Heart left ventricle (tissue), 16 donors: ENCODE measurements at regions of chr1 and their contacts with region 1.

Region 1: DNA sequence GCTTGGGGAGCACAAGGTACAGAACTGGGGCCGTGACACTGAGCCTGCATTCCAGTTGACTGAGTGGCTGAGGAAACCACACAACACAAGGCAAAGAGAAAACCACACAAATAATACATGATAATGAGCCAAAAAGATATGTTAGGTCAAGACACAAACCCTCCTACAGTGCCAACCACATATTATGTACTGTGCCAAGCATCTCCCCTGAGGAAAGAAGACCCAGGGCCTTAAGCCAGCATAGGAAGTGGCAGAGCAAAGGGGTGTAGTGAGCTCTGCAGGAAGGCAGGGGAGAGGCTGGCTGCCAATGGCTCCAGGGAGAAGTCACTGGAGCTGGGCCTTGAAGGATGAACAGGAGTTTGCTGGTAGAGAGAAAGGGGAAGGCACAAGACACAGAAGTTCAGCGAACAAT is 28.2 kb downstream of the CTNNBIP1 start:
- DNase-seq: no peak
- ATAC-seq: no peak
- H3K4me3 ChIP-seq: no peak overlapping the region
- H3K27ac ChIP-seq: peak overlapping the region in 2 of 12 donors; percentile 23 to 48
- H3K4me1 ChIP-seq: peaks cover 0 to 60% (median 31%) of the 10 kb centered on the region in 12 donors
- H3K27me3 ChIP-seq: no peaks in the 10 kb centered on the region
- CTCF ChIP-seq: no peak
- POLR2A ChIP-seq: no peak

Region 2: GRCh38 chr1:9700340-9700739 is 181.5 kb before region 1 on chr1:
- intact Hi-C with region 1: no loop called
- DNase-seq: no peak
- ATAC-seq: no peak
- H3K4me3 ChIP-seq: no peak overlapping the region
- H3K27ac ChIP-seq: no peak overlapping the region
- H3K4me1 ChIP-seq: peaks cover 0 to 34% (median 0%) of the 10 kb centered on the region in 12 donors
- H3K27me3 ChIP-seq: no peaks in the 10 kb centered on the region
- CTCF ChIP-seq: no peak
- POLR2A ChIP-seq: no peak

Region 3: DNA sequence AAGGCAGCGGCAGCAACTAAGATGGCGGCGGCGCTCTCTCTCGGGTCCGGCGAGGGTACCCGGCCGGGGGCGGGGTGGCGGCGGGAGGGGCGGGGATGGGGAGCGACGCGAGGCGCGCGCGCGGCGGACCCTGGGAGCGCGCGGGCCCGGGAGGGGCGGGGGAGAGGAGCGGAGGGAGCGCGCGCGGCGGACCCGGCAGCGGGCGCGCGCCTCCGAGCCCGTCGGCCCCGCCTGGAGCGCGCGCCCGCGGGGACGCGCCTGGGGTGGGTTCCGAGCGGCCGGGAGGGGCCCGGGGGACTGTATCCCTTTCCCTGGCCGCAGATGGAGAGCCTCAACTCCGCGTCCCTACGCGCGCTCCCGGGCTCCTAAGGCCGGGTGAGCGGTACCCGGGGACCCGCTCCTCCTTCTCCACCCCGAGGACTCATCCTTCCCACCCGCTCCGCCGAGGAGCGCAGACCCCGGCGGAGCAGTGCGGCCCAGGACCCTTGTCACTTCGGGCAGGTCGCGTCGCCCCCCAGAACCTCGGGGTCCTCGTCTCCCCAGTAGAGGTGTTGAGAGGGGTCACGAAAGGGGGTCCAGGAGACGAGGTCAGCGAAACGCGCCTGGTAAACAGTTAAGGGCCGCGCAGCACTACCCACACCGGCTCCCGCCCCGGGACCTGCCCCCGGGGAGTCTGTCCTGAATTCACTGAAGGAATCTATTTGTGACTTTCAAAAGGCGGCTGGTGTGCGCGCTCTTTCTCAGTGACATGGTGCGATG is 57.7 kb before region 1 on chr1 and contains the start of gene CLSTN1:
- intact Hi-C with region 1: no loop called
- DNase-seq: peak; percentile 91 to 96 (median 92)
- ATAC-seq: peak; percentile 63 to 91 (median 84)
- H3K4me3 ChIP-seq: peak within 1 kb of the TSS; percentile 62 to 98 (median 88)
- H3K27ac ChIP-seq: peak within 1 kb of the TSS; percentile 63 to 93 (median 88)
- H3K4me1 ChIP-seq: peaks cover 12 to 43% (median 35%) of the 10 kb centered on the region in 12 donors
- H3K27me3 ChIP-seq: no peaks in the 10 kb centered on the region
- CTCF ChIP-seq: no peak
- POLR2A ChIP-seq: peak in 1 of 2 donors; percentile 31
- total RNA-seq, gene CLSTN1: 50.6 to 79.4 (median 64.3) TPM

Region 4: DNA sequence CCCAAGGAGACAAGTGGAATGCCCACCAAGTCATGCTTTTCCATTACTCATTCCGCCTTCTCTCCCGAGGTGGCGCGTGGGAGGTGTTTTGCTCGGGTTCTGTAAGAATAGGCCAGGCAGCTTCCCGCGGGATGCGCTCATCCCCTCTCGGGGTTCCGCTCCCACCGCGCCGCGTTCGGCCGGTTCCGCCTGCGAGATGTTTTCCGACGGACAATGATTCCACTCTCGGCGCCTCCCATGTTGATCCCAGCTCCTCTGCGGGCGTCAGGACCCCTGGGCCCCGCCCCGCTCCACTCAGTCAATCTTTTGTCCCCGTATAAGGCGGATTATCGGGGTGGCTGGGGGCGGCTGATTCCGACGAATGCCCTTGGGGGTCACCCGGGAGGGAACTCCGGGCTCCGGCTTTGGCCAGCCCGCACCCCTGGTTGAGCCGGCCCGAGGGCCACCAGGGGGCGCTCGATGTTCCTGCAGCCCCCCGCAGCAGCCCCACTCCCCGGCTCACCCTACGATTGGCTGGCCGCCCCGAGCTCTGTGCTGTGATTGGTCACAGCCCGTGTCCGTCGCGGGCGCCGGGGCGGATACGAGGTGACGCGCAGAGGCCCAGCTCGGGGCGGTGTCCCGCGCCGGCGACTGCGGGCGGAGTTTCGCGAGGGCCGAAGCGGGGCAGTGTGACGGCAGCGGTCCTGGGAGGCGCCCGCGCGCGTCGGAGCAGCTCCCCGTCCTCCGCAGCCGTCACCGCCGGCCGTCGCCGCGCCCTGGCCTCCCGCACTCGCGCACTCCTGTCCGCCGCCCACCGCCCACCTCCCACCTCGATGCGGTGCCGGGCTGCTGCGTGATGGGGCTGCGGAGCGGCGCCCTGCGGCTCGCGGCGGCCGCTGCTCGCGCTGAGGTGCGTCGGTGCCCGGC is 328.3 kb after region 1 on chr1 and contains the start of gene KIF1B:
- intact Hi-C with region 1: no loop called
- DNase-seq: peak; percentile 99 to 100 (median 99)
- ATAC-seq: peak; percentile 96 to 99 (median 98)
- H3K4me3 ChIP-seq: peak within 1 kb of the TSS; percentile 80 to 97 (median 94)
- H3K27ac ChIP-seq: peak within 1 kb of the TSS; percentile 97 to 100 (median 99)
- H3K4me1 ChIP-seq: peaks cover 0 to 44% (median 31%) of the 10 kb centered on the region in 12 donors
- H3K27me3 ChIP-seq: no peaks in the 10 kb centered on the region
- CTCF ChIP-seq: peak; percentile 98 to 100 (median 98)
- POLR2A ChIP-seq: peak; percentile 97 to 99
- total RNA-seq, gene KIF1B: 65.5 to 137 (median 82.0) TPM

Region 5: DNA sequence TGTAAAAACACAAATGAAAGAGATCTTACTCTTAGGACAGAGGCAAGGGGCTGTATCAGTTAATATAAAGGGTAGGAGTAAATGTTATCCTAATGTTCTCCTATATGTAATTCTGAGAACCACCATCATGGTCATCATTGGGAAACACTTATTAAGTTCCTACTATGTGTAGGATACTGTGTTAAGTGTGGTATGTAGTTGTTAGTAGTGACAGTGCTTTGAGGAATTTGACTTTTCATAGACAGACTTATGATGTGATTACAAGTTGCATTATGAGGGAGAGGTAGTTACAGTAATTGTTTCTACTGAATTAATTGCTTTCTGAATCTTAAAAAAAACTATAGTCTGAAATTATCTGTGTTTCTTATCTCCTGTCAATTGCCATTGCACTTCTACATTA is 465.3 kb after region 1 on chr1:
- intact Hi-C with region 1: loop called in 1 of 10 experiments (anchors 5 kb)
- DNase-seq: no peak
- ATAC-seq: no peak
- H3K4me3 ChIP-seq: no peak overlapping the region
- H3K27ac ChIP-seq: no peak overlapping the region
- H3K4me1 ChIP-seq: no peaks in the 10 kb centered on the region
- H3K27me3 ChIP-seq: no peaks in the 10 kb centered on the region
- CTCF ChIP-seq: no peak
- POLR2A ChIP-seq: no peak